Activated CD4-positive, alpha-beta T cell treated with anti-CD3 and anti-CD28 coated beads, Interleukin-2, amount 10 ng/mL, durations not matched to agents 24 days and 14 days (primary cell): ENCODE measurements at regions of chr17 and their contacts with region 1.

Region 1: DNA sequence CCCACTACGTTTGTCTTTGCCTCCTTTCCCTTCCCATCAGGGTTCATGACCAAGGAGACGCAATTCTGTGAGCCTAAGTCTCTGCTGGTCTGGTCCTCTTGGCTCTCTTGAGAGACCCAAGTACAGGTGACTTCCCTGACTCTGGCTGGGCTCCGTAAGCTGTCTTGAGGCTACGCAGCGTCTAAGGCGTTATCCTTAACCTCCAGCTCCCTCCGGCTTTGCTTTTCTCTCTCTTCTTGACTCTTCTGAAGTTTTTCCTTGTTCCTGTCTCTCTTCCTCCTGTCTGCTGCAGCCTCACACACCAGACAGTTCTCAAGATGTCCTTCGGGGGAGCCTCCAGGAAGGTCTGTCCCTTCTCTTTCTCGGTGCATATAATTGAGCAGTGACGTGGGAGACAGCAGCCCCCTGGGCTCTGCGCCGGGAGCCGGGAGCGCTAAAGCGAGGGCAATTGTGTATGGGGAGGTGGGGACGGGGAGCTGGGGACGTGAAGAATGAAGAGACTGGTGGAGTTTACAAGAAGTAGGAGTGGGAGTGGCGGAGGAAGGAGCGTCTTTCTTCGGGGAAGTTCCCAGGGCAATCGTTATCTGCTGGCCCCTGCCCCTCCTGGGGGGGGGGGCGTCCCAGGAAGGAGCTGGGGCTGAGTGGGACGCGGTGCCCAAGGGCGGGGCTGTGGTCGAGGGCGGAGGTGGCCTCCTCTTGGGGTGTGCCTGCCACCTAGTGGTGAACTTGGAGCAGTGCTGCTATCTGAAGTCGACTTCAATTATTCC is 6.9 kb upstream of the PIRT start:
- DNase-seq: peak; percentile 90
- H3K4me3 Mint-ChIP-seq: peak overlapping the region; percentile 84
- H3K27ac Mint-ChIP-seq: no peak overlapping the region
- H3K4me1 Mint-ChIP-seq: peaks cover 12% of the 10 kb centered on the region
- H3K27me3 Mint-ChIP-seq: peaks cover 4% of the 10 kb centered on the region

Region 2: GRCh38 chr17:10646392-10646990 is 198.3 kb before region 1 on chr17:
- intact Hi-C with region 1: loop called (anchors 1 kb)
- DNase-seq: peak; percentile 92
- H3K4me3 Mint-ChIP-seq: no peak overlapping the region
- H3K27ac Mint-ChIP-seq: no peak overlapping the region
- H3K4me1 Mint-ChIP-seq: no peaks in the 10 kb centered on the region
- H3K27me3 Mint-ChIP-seq: no peaks in the 10 kb centered on the region

Region 3: DNA sequence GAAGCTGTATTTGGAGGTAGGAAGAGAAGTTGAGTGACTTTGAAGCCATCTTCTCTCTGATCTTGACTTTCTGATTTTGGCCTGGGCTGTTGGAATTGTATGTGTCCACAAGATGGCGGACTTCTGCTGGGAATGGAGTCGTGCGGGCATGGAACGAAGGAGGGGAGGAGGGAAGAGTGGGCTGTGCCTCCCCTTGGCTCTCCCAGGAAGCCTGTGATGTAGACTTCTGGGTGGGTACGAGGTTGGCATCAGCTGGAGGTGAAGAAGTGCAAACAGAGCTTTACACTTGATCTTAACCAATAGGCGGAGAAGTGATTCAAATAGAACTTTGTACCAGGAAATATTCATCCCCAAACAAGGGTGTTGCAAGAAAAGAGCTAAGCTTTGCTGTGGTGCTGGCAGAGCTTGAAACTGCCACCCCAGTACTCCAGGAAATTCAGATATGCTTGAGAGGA is 107.6 kb before region 1 on chr17:
- intact Hi-C with region 1: loop called (anchors 1 kb)
- DNase-seq: peak; percentile 71
- H3K4me3 Mint-ChIP-seq: no peak overlapping the region
- H3K27ac Mint-ChIP-seq: no peak overlapping the region
- H3K4me1 Mint-ChIP-seq: peaks cover 3% of the 10 kb centered on the region
- H3K27me3 Mint-ChIP-seq: peaks cover 24% of the 10 kb centered on the region

Region 4: DNA sequence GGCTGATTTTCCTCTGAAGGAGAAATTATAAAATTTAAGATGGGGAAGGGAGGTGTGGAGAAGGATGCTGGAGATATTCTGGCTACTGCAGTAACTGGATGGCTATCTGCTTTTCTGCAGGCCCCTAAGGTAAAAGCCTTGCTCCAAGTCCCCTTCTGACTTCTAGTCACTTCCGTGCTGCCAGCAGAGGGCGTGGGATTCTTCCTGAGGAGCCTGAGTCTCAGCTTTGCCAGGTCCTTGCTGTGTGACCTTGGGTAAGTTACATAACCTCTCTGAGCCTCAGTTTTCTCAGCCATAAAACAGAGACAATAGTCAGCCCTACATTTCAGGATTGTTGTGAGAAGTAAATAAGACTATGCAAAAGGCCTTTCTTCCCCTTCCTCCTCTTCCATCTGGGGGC is 90.7 kb before region 1 on chr17:
- intact Hi-C with region 1: loop called (anchors 1 kb)
- DNase-seq: peak; percentile 70
- H3K4me3 Mint-ChIP-seq: no peak overlapping the region
- H3K27ac Mint-ChIP-seq: no peak overlapping the region
- H3K4me1 Mint-ChIP-seq: no peaks in the 10 kb centered on the region
- H3K27me3 Mint-ChIP-seq: peaks cover 3% of the 10 kb centered on the region

Region 5: GRCh38 chr17:10772425-10773380 is 72.1 kb before region 1 on chr17:
- intact Hi-C with region 1: loop called (anchors 2 kb)
- DNase-seq: peak; percentile 75
- H3K4me3 Mint-ChIP-seq: no peak overlapping the region
- H3K27ac Mint-ChIP-seq: no peak overlapping the region
- H3K4me1 Mint-ChIP-seq: no peaks in the 10 kb centered on the region
- H3K27me3 Mint-ChIP-seq: no peaks in the 10 kb centered on the region